Endothelial cell of umbilical vein (primary cell): ENCODE measurements at regions of chr1 and their contacts with region 1.

Region 1: GRCh38 chr1:180533266-180533987 is 25.3 kb upstream of the OVAAL start:
- DNase-seq: peak; percentile 66
- H3K4me3 ChIP-seq: no peak overlapping the region
- H3K27ac ChIP-seq: no peak overlapping the region
- H3K4me1 ChIP-seq: peaks cover 20% of the 10 kb centered on the region
- H3K27me3 ChIP-seq: peaks cover 6 to 18% of the 10 kb centered on the region in 2 experiments
- CTCF ChIP-seq: peak; percentile 79 to 88
- POLR2A ChIP-seq: no peak

Region 2: GRCh38 chr1:180515864-180516388 is 17.5 kb before region 1 on chr1:
- CTCF ChIA-PET with region 1: interaction called, 64 read pairs
- POLR2A ChIA-PET with region 1: no interaction called
- dilution Hi-C with region 1: no loop called
- intact Hi-C with region 1: loop called (anchors 1 kb)
- DNase-seq: peak; percentile 91
- H3K4me3 ChIP-seq: no peak overlapping the region
- H3K27ac ChIP-seq: peak overlapping the region; percentile 52
- H3K4me1 ChIP-seq: peaks cover 29% of the 10 kb centered on the region
- H3K27me3 ChIP-seq: no peaks in the 10 kb centered on the region
- CTCF ChIP-seq: peak; percentile 68 to 73
- POLR2A ChIP-seq: no peak

Region 3: DNA sequence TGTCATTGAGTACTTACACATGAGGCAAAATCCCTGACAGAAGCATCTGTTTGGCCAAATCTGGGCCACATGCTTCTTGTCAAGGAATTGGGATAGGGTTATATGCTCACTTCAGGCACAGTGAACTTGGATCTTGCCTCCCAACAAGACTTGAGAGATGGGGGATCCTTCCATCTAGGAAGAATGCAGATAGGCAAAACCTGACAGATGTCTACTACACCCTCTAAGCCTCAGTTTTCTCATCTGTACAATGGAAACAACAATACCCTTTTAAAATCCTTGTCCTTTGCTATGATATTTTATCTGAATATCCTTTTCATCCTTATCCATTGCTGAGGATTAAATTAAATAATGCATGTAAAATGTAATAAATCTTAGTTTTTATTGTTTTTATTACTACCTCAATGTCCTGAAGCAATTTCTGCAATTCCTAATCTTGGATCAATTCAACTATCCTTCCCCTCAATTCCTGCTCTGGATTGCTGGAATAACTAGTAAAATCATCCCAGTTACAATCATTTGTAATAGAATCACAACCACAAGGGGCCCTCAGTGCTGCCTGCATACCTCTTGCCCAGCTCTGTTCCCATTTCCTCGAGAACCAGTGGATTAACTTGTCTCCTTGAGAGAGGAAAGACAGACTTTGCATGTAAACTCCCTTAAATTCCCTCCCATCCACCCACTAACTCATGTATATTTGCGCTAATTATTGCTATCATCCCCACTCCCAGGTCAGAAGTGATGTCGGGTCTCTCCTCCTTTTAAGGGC is 90.3 kb after region 1 on chr1:
- CTCF ChIA-PET with region 1: interaction called, 4 read pairs
- POLR2A ChIA-PET with region 1: no interaction called
- dilution Hi-C with region 1: no loop called
- intact Hi-C with region 1: loop called (anchors 2 kb)
- DNase-seq: peak; percentile 30
- H3K4me3 ChIP-seq: no peak overlapping the region
- H3K27ac ChIP-seq: no peak overlapping the region
- H3K4me1 ChIP-seq: no peaks in the 10 kb centered on the region
- H3K27me3 ChIP-seq: peaks cover 13 to 20% of the 10 kb centered on the region in 2 experiments
- CTCF ChIP-seq: peak in 1 of 2 donors; percentile 32
- POLR2A ChIP-seq: no peak

Region 4: GRCh38 chr1:180631766-180632325 is 98.4 kb after region 1 on chr1 and contains the start of gene XPR1:
- CTCF ChIA-PET with region 1: interaction called, 7 read pairs
- POLR2A ChIA-PET with region 1: no interaction called
- dilution Hi-C with region 1: no loop called
- intact Hi-C with region 1: loop called (anchors 1 kb)
- DNase-seq: peak; percentile 99
- H3K4me3 ChIP-seq: peak within 1 kb of the TSS; percentile 71 to 90 (median 87)
- H3K27ac ChIP-seq: peak within 1 kb of the TSS; percentile 34
- H3K4me1 ChIP-seq: peaks cover 13% of the 10 kb centered on the region
- H3K27me3 ChIP-seq: peaks cover 3 to 5% of the 10 kb centered on the region in 2 experiments
- CTCF ChIP-seq: peak in 1 of 2 donors; percentile 26
- POLR2A ChIP-seq: peak; percentile 52
- total RNA-seq, gene XPR1: 26.7 and 29.3 TPM in 2 replicates

Region 5: GRCh38 chr1:181033799-181034451 is 500.5 kb after region 1 on chr1 and contains the start of gene MR1:
- CTCF ChIA-PET with region 1: no interaction called
- POLR2A ChIA-PET with region 1: no interaction called
- dilution Hi-C with region 1: no loop called
- intact Hi-C with region 1: loop called (anchors 5 kb)
- DNase-seq: peak; percentile 91
- H3K4me3 ChIP-seq: peak within 1 kb of the TSS in 2 of 3 experiments; percentile 1 to 43
- H3K27ac ChIP-seq: peak within 1 kb of the TSS; percentile 18
- H3K4me1 ChIP-seq: peaks cover 10% of the 10 kb centered on the region
- H3K27me3 ChIP-seq: no peaks in the 10 kb centered on the region
- CTCF ChIP-seq: no peak
- POLR2A ChIP-seq: no peak
- total RNA-seq, gene MR1: 1.1 and 1.3 TPM in 2 replicates

Region 6: GRCh38 chr1:181166377-181167196 is 633.2 kb after region 1 on chr1:
- CTCF ChIA-PET with region 1: no interaction called
- POLR2A ChIA-PET with region 1: no interaction called
- dilution Hi-C with region 1: no loop called
- intact Hi-C with region 1: loop called (anchors 5 kb)
- DNase-seq: peak; percentile 74
- H3K4me3 ChIP-seq: no peak overlapping the region
- H3K27ac ChIP-seq: no peak overlapping the region
- H3K4me1 ChIP-seq: no peaks in the 10 kb centered on the region
- H3K27me3 ChIP-seq: peaks cover 2 to 10% of the 10 kb centered on the region in 2 experiments
- CTCF ChIP-seq: peak; percentile 71 to 82
- POLR2A ChIP-seq: no peak